ENCODE measurements at regions of chr13 and their contacts with region 1.

Region 1: GRCh38 chr13:46804391-46804815 is 7.4 kb upstream of the ESD start:
- DNase-seq: peak; percentile 97
- H3K4me3 ChIP-seq: no peak overlapping the region
- H3K27ac ChIP-seq: peak overlapping the region; percentile 41
- H3K4me1 ChIP-seq: peaks cover 25% of the 10 kb centered on the region
- H3K27me3 ChIP-seq: no peaks in the 10 kb centered on the region
- CTCF ChIP-seq: peak in 1 of 2 donors; percentile 10

Region 2: DNA sequence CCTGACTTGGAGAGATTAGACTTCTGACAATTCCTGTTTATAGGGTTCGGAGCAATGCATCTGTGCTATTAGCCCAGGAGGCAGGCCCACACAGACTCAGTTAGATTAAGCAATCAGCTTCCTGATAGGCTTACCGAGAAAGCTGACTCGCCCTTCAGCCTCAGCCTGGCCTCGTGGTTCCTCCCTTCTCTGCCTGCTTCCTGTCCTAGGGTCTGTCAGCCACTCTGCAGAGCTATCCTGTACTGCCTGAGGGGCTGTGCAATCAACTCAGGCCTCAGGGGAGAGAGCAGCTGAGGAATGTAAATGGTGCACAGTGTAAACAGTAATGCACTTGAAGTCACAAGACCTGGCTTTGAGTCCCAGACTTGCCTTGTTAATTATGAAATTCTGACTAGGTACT is 61.7 kb after region 1 on chr13:
- CTCF ChIA-PET with region 1: no interaction called
- dilution Hi-C with region 1: loop called (anchors 5 kb)
- in situ Hi-C with region 1: no loop called
- intact Hi-C with region 1: no loop called
- DNase-seq: peak; percentile 57
- H3K4me3 ChIP-seq: no peak overlapping the region
- H3K27ac ChIP-seq: no peak overlapping the region
- H3K4me1 ChIP-seq: peaks cover 12% of the 10 kb centered on the region
- H3K27me3 ChIP-seq: no peaks in the 10 kb centered on the region
- CTCF ChIP-seq: no peak

Region 3: GRCh38 chr13:46961719-46962118 is 157.3 kb after region 1 on chr13:
- CTCF ChIA-PET with region 1: no interaction called
- dilution Hi-C with region 1: no loop called
- in situ Hi-C with region 1: loop called in 1 of 2 experiments (anchors 25 kb)
- intact Hi-C with region 1: no loop called
- DNase-seq: peak; percentile 81
- H3K4me3 ChIP-seq: no peak overlapping the region
- H3K27ac ChIP-seq: no peak overlapping the region
- H3K4me1 ChIP-seq: peaks cover 18% of the 10 kb centered on the region
- H3K27me3 ChIP-seq: no peaks in the 10 kb centered on the region
- CTCF ChIP-seq: no peak